Naive thymus-derived CD4-positive, alpha-beta T cell (primary cell): ENCODE measurements at regions of chr9 and their contacts with region 1.

Region 1: DNA sequence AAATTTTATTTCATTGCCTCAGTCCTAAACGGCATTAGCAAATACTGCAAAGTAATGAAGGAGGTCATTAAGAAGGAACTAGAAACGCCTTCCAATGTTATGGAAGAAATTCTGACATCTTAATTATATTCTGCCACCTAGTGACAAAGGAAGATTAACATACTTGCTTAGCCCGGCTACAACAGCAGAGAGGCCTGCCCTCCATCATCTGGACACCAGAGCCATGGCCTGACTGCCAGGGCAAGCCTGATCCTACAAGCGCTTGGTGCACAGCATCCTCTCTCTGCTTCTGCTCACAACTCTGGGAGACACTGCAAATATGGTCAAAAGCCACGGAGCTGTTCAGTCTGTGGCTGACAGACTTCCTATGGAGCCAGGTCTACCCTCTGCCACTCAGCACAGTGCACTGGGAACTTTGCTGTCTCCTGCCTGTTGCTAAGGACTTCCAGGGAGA is 87.3 kb upstream of the SLC44A1 start:
- DNase-seq: peak in 7 of 9 donors; percentile 18 to 53 (median 45)
- ATAC-seq: peak; percentile 89
- H3K4me3 ChIP-seq: no peak overlapping the region
- H3K4me3 Mint-ChIP-seq: no peak overlapping the region
- H3K27ac ChIP-seq: no peak overlapping the region
- H3K27ac Mint-ChIP-seq: peak overlapping the region in 1 of 9 donors; percentile 60
- H3K4me1 ChIP-seq: peaks cover 0 to 7% of the 10 kb centered on the region in 2 donors
- H3K4me1 Mint-ChIP-seq: peaks cover 12 to 34% (median 22%) of the 10 kb centered on the region in 7 donors
- H3K27me3 ChIP-seq: no peaks in the 10 kb centered on the region
- H3K27me3 Mint-ChIP-seq: peaks cover 0 to 6% (median 0%) of the 10 kb centered on the region in 5 donors

Region 2: DNA sequence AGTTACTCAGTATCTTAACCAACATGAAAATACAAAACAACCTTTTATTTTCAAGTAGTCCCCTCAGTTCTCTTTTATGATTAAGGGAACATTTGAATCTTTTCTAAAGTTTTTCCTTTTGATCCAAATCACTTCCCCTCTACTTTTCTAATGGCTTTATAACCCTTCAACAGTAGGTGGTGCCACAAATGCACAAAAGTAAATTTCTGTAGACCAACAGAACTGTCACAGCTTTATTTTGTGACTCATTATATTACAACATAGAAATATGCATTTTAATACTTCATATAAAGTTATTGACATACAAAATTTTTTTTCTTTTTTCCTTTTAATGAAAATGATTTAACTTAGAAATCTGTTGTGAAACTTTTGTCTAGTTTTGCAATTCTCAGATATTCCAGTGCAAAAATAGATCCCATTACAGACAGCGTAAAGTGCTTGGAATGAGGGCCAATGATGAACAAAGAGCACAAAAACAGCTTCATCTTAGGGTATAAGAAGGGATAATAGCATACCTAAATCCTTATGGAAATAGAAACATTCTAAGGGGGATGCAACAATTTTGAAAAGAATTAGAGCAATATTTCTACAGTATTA is 376.3 kb before region 1 on chr9:
- CTCF ChIA-PET with region 1: interaction called, 6 read pairs
- POLR2A ChIA-PET with region 1: no interaction called
- intact Hi-C with region 1: loop called (anchors 1 kb)
- DNase-seq: peak in 1 of 9 donors; percentile 5
- ATAC-seq: peak; percentile 74
- H3K4me3 ChIP-seq: no peak overlapping the region
- H3K4me3 Mint-ChIP-seq: no peak overlapping the region
- H3K27ac ChIP-seq: no peak overlapping the region
- H3K27ac Mint-ChIP-seq: no peak overlapping the region
- H3K4me1 ChIP-seq: no peaks in the 10 kb centered on the region
- H3K4me1 Mint-ChIP-seq: peaks cover 0 to 6% (median 0%) of the 10 kb centered on the region in 7 donors
- H3K27me3 ChIP-seq: no peaks in the 10 kb centered on the region
- H3K27me3 Mint-ChIP-seq: peaks cover 0 to 3% (median 0%) of the 10 kb centered on the region in 5 donors

Region 3: DNA sequence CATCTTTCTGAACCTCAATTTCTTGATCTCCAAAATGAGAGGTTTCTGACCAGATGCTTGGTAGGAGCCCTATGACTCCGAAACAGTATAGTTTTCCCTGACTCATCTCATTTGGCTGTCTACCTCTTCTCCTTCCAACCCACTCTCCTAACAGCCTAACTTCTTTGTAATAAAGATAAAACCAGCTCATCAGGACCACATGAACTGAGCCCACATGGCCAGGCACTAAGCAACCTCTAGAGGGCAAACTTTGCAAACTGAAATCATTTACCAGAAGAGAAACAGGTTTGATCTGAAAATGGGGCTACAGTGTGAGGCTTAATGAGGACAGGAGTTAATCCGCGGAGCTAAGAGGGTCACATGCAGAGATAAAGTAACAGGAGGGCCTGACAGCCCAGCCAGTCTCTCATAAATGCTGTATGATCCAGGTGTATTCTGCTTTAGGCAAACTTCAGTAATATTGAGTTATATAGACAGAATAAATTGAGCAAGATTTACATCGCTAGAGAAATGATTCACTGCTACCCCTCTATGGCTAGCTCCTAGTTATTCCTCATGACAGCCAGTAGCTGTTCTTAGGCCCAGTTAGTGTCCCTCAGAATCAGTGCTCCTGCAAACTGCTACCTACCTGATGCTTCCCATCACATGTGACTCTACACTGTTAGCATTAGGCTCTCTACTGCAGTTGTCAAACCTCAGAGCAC is 293.8 kb before region 1 on chr9:
- CTCF ChIA-PET with region 1: interaction called, 44 read pairs
- POLR2A ChIA-PET with region 1: interaction called, 3 read pairs
- intact Hi-C with region 1: loop called (anchors 1 kb)
- DNase-seq: peak in 8 of 9 donors; percentile 25 to 69 (median 57)
- ATAC-seq: peak; percentile 80
- H3K4me3 ChIP-seq: no peak overlapping the region
- H3K4me3 Mint-ChIP-seq: no peak overlapping the region
- H3K27ac ChIP-seq: no peak overlapping the region
- H3K27ac Mint-ChIP-seq: peak overlapping the region in 2 of 9 donors; percentile 2 to 62
- H3K4me1 ChIP-seq: no peaks in the 10 kb centered on the region
- H3K4me1 Mint-ChIP-seq: peaks cover 0 to 18% (median 7%) of the 10 kb centered on the region in 7 donors
- H3K27me3 ChIP-seq: no peaks in the 10 kb centered on the region
- H3K27me3 Mint-ChIP-seq: no peaks in the 10 kb centered on the region

Region 4: GRCh38 chr9:104968025-104968982 is 188.9 kb before region 1 on chr9:
- CTCF ChIA-PET with region 1: no interaction called
- POLR2A ChIA-PET with region 1: interaction called, 3 read pairs
- intact Hi-C with region 1: loop called in 1 of 2 experiments (anchors 2 kb)
- DNase-seq: peak; percentile 80 to 95 (median 91)
- ATAC-seq: peak; percentile 99
- H3K4me3 ChIP-seq: peak overlapping the region; percentile 85
- H3K4me3 Mint-ChIP-seq: peak overlapping the region; percentile 82 to 96 (median 94)
- H3K27ac ChIP-seq: peak overlapping the region; percentile 69
- H3K27ac Mint-ChIP-seq: peak overlapping the region; percentile 64 to 92 (median 86)
- H3K4me1 ChIP-seq: peaks cover 0 to 6% of the 10 kb centered on the region in 2 donors
- H3K4me1 Mint-ChIP-seq: peaks cover 12 to 25% (median 17%) of the 10 kb centered on the region in 7 donors
- H3K27me3 ChIP-seq: peaks cover 0 to 4% of the 10 kb centered on the region in 2 donors
- H3K27me3 Mint-ChIP-seq: peaks cover 0 to 30% (median 0%) of the 10 kb centered on the region in 5 donors